PC-9 (cell line): ENCODE measurements at regions of chr6 and their contacts with region 1.

Region 1: GRCh38 chr6:134938896-134939295 is 11.0 kb downstream of the ALDH8A1 start:
- DNase-seq: no peak
- H3K4me3 ChIP-seq: no peak overlapping the region
- H3K27ac ChIP-seq: no peak overlapping the region
- H3K4me1 ChIP-seq: no peaks in the 10 kb centered on the region
- H3K27me3 ChIP-seq: no peaks in the 10 kb centered on the region
- CTCF ChIP-seq: no peak

Region 2: GRCh38 chr6:133923938-133924593 is 1014.8 kb before region 1 on chr6:
- CTCF ChIA-PET with region 1: no interaction called
- POLR2A ChIA-PET with region 1: no interaction called
- intact Hi-C with region 1: loop called (anchors 2 kb)
- DNase-seq: peak; percentile 58 to 66
- H3K4me3 ChIP-seq: no peak overlapping the region
- H3K27ac ChIP-seq: no peak overlapping the region
- H3K4me1 ChIP-seq: no peaks in the 10 kb centered on the region
- H3K27me3 ChIP-seq: no peaks in the 10 kb centered on the region
- CTCF ChIP-seq: peak; percentile 98

Region 3: DNA sequence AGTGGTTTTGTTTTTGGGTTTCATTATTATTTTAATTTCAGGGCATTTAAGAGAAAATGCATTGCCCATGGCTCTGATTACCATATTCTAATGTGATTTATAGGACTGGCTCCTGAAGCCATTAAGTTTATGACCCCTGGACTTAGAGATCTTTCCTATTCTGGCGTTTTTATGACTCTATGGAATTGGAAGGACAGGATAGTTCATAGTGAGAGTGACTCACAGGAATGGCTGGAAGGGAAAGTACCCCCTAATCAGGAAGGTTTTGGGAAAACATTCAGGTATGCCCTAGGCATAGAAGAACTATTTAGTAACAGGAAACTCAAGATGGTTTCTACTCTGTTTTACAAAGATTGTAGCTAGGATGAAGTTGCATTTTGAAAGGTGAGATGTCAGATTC is 777.9 kb before region 1 on chr6:
- CTCF ChIA-PET with region 1: interaction called, 5 read pairs
- POLR2A ChIA-PET with region 1: no interaction called
- intact Hi-C with region 1: loop called (anchors 1 kb)
- DNase-seq: peak in 1 of 2 experiments; percentile 77
- H3K4me3 ChIP-seq: no peak overlapping the region
- H3K27ac ChIP-seq: peak overlapping the region; percentile 59
- H3K4me1 ChIP-seq: peaks cover 20% of the 10 kb centered on the region
- H3K27me3 ChIP-seq: no peaks in the 10 kb centered on the region
- CTCF ChIP-seq: no peak

Region 4: DNA sequence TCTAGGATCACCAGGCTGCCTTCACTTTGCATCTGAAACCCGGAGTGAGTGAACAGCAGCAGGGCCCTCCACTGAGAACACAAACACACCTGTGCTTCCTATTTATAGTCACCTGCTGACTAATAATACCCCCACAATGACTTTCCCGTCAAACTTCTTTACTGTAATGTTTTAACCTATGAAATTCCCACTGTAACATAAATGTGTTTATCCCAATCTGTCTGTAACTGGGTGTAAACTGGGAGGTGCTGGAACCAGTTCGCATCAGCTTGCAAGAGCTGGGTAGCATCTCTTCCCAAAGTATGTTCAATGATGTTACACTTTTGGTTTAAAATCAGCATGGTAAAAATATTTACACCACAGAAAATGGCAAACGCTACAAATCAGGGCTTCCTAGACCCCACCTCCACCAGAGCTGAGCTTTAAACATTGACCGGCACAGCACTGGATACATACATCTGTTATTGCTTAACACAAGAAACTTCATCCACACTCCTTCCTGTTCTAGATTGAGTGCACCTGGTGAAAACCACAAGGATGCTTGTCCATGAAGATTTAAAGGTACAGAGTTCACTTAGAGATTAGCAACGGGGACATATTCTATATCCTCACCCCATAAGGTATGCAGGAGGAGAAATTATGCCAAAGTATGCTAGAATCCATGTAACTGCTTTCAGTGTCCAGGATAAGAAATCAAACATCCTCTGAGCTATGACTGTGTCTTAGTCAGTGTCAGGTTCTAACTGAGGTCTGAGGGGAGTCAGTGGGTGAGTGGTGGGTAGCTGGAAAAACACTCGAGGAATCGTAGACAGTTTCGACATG is 68.0 kb before region 1 on chr6:
- CTCF ChIA-PET with region 1: no interaction called
- POLR2A ChIA-PET with region 1: no interaction called
- intact Hi-C with region 1: no loop called
- DNase-seq: no peak
- H3K4me3 ChIP-seq: no peak overlapping the region
- H3K27ac ChIP-seq: no peak overlapping the region
- H3K4me1 ChIP-seq: no peaks in the 10 kb centered on the region
- H3K27me3 ChIP-seq: no peaks in the 10 kb centered on the region
- CTCF ChIP-seq: no peak

Region 5: DNA sequence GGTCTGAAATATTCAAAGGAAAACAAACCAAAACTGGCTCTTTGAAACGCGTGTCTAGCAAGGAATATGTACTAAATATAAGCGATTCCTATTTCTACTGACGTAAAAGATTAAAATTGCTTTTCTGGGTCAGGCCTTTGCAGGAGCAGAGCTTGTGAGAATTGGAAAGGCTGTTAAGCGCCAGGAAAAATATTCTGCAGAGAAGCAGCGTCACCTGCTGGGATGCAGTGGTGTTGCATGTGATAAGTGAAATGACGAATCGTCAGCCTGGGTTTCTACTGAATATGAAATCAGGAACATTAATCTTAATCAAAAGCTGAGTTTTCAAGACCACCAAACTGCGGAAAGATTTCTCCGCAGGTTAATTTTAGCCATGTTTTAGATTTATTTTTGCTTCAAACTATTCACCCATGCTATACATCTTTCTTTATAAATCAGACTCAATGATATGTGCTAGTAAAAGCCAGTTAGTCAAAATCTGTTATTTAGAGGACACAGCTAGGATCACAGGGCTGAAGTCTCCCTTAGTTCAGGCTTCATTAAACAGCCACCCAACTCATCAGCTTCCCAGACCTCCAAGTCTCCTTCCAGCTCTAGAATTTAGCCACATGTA is 56.4 kb before region 1 on chr6:
- CTCF ChIA-PET with region 1: interaction called, 6 read pairs
- POLR2A ChIA-PET with region 1: no interaction called
- intact Hi-C with region 1: loop called (anchors 1 kb)
- DNase-seq: peak in 1 of 2 experiments; percentile 59
- H3K4me3 ChIP-seq: no peak overlapping the region
- H3K27ac ChIP-seq: no peak overlapping the region
- H3K4me1 ChIP-seq: no peaks in the 10 kb centered on the region
- H3K27me3 ChIP-seq: no peaks in the 10 kb centered on the region
- CTCF ChIP-seq: peak; percentile 100